ENCODE measurements at regions of chr5 and their contacts with region 1.

Region 1: DNA sequence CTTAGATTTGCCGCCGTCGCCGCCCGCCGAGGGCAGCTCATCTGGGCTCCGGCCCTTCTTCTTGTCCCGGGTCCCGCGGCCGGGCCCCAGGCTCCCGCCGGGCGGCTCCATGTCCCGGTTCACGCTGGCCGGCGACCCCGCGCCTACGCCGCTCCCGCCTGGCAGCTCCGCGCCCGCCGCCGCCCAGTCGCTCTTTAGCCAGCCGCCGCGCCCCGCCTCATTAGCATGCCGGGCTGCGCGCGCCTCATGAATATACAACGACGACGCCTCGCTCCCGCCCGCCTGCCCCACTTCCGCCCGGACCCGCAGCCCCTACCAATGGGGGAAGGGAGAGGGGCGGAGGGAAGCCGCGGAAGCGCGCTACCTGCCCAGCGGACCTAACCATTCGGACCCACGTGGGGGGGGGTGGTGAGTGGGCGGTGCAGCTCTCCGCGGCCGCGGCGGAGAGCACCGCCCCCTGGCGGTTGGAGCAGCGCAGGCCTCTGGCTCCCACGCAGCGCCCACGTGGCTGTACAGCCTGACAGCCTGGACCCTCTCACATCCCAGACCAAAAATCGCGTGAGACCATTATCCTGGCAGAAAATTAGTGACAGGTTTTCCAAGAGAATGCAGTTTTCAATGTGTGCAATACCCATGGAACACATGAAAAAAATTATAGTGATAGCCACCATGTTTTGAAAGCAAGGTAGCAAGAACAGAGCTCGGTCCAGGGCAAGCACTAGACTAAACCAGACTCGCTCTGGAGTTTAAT is at the start of gene DIAPH1:
- DNase-seq: peak; percentile 98
- H3K4me3 ChIP-seq: peak within 1 kb of the TSS; percentile 69 to 92 (median 79)
- H3K27ac ChIP-seq: peak within 1 kb of the TSS; percentile 81 to 89 (median 84)
- H3K4me1 ChIP-seq: peaks cover 0 to 24% (median 18%) of the 10 kb centered on the region in 4 donors
- H3K27me3 ChIP-seq: no peaks in the 10 kb centered on the region
- CTCF ChIP-seq: peak; percentile 94 to 98 (median 95)
- EP300 ChIP-seq: no peak
- POLR2A ChIP-seq: peak in 1 of 2 donors; percentile 31
- total RNA-seq, gene DIAPH1: 14.4 to 26.9 (median 19.8) TPM

Region 2: DNA sequence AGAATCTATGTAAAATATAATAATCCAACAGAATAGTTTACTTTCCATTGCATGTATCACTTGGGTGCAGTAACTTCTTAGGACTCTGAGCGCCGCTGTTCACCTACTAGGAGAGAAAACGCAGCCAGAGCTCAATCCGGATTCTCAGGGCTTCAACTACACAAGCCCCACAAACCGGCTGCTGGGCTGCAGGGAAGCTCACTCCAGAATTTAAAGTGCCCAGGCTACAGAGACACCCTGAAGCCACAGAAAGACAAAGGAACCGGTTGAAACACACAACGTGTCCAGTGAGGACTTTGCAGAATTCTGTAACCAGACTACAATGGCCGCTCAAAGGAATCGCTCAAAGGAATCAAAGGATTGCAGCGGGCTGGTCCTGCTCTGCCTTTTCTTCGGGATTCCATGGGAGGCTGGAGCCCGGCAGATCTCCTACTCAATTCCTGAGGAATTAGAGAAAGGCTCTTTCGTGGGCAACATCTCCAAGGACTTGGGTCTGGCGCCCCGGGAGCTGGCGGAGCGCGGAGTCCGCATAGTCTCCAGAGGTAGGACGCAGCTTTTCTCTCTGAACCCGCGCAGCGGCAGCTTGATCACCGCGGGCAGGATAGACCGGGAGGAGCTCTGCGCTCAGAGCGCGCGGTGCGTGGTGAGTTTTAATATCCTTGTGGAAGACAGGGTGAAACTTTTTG is 206.0 kb before region 1 on chr5 and contains the start of gene PCDHGA10:
- intact Hi-C with region 1: no loop called
- DNase-seq: no peak
- H3K4me3 ChIP-seq: peak within 1 kb of the TSS in 3 of 4 donors; percentile 8 to 23 (median 19)
- H3K27ac ChIP-seq: peak within 1 kb of the TSS in 1 of 4 donors; percentile 3
- H3K4me1 ChIP-seq: no peaks in the 10 kb centered on the region
- H3K27me3 ChIP-seq: no peaks in the 10 kb centered on the region
- CTCF ChIP-seq: peak in 1 of 4 experiments; percentile 13
- EP300 ChIP-seq: no peak
- POLR2A ChIP-seq: no peak
- total RNA-seq, gene PCDHGA10: 6.1 to 11.5 (median 9.0) TPM

Region 3: DNA sequence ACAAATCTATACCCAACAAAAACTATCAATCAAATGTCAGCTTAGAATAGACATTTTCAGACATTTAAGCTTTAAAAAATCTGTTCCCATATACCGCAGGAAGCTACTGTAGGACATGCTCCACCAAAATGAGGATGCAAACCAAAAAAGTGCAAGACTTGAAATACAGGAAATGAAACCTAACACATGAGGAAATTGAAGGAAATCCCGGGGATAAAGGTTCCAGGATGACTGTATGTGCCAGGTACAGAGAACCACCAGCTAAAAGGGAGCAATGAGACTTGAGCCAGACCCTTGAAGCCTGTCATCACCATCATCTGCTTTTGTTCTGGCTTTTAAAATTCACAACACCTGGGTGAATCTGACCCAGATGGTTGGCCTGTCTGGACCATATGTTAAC is 21.6 kb before region 1 on chr5:
- intact Hi-C with region 1: loop called (anchors 1 kb)
- DNase-seq: no peak
- H3K4me3 ChIP-seq: no peak overlapping the region
- H3K27ac ChIP-seq: no peak overlapping the region
- H3K4me1 ChIP-seq: peaks cover 0 to 8% (median 0%) of the 10 kb centered on the region in 4 donors
- H3K27me3 ChIP-seq: no peaks in the 10 kb centered on the region
- CTCF ChIP-seq: no peak
- EP300 ChIP-seq: no peak
- POLR2A ChIP-seq: no peak

Region 4: GRCh38 chr5:141636413-141637122 is 17.6 kb after region 1 on chr5 and contains the starts of genes HDAC3 and RELL2:
- intact Hi-C with region 1: loop called (anchors 1 kb)
- DNase-seq: peak; percentile 96
- H3K4me3 ChIP-seq: peak within 1 kb of the TSS; percentile 72 to 88 (median 80)
- H3K27ac ChIP-seq: peak within 1 kb of the TSS; percentile 75 to 84 (median 77)
- H3K4me1 ChIP-seq: peaks cover 0 to 42% (median 30%) of the 10 kb centered on the region in 4 donors
- H3K27me3 ChIP-seq: peaks cover 0 to 17% (median 7%) of the 10 kb centered on the region in 3 donors
- CTCF ChIP-seq: no peak
- EP300 ChIP-seq: no peak
- POLR2A ChIP-seq: peak in 1 of 2 donors; percentile 59
- total RNA-seq, gene HDAC3: 32.4 to 51.5 (median 38.2) TPM
- total RNA-seq, gene RELL2: 0.99 to 6.1 (median 2.1) TPM

Region 5: GRCh38 chr5:141849375-141850243 is 230.6 kb after region 1 on chr5:
- intact Hi-C with region 1: no loop called
- DNase-seq: peak; percentile 92
- H3K4me3 ChIP-seq: peak overlapping the region; percentile 59 to 78 (median 66)
- H3K27ac ChIP-seq: peak overlapping the region; percentile 85 to 93 (median 90)
- H3K4me1 ChIP-seq: peaks cover 0 to 16% (median 11%) of the 10 kb centered on the region in 4 donors
- H3K27me3 ChIP-seq: peaks cover 0 to 7% (median 0%) of the 10 kb centered on the region in 3 donors
- CTCF ChIP-seq: peak in 3 of 4 experiments; percentile 14 to 38 (median 26)
- EP300 ChIP-seq: peak in 1 of 4 donors; percentile 3
- POLR2A ChIP-seq: peak; percentile 69 to 80